ENCODE measurements at regions of chr14 and their contacts with region 1.

Region 1: GRCh38 chr14:63533474-63533873 is 9.7 kb downstream of the PPP2R5E start:
- DNase-seq: no peak
- H3K4me3 ChIP-seq: no peak overlapping the region
- H3K27ac ChIP-seq: no peak overlapping the region
- H3K4me1 ChIP-seq: no peaks in the 10 kb centered on the region
- H3K27me3 ChIP-seq: no peaks in the 10 kb centered on the region
- CTCF ChIP-seq: no peak

Region 2: GRCh38 chr14:63478010-63478409 is 55.5 kb before region 1 on chr14:
- CTCF ChIA-PET with region 1: no interaction called
- dilution Hi-C with region 1: loop called (anchors 5 kb)
- in situ Hi-C with region 1: no loop called
- intact Hi-C with region 1: no loop called
- DNase-seq: no peak
- H3K4me3 ChIP-seq: no peak overlapping the region
- H3K27ac ChIP-seq: no peak overlapping the region
- H3K4me1 ChIP-seq: no peaks in the 10 kb centered on the region
- H3K27me3 ChIP-seq: no peaks in the 10 kb centered on the region
- CTCF ChIP-seq: no peak